Activated naive CD4-positive, alpha-beta T cell treated with anti-CD3 and anti-CD28 coated beads for 36 hours (primary cell): ENCODE measurements at regions of chr15 and their contacts with region 1.

Region 1: DNA sequence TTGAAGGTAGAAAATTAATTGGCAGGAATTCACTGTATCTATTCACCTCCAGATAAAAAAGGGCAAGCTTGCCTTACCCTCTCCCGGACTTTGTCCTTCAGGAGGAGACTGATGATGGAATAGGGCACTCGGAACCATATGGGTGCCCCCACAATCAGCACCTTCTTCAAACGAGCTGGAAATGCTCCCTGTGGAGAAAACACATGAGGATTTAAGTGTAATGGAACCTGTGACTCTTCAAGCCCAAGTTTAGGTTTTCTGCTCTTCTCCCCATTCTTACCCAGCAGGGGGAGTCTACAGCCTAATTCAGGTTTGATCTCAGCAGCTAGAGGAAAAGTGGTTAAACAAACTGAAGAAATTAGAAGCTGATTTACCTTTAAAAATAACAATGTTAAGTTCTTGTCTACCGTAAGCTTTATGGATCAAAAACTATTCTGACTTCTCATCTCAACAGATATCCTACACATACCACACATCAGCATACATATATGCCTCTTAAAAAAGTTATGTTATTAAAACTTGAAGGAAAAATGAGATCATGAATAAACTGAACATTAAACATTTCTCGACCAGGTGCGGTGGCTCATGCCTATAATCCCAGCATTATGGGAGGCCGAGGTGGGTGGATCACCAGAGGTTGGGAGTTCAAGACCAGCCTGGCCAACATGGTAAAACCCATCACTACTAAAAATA is 57.5 kb upstream of the SIN3A start:
- DNase-seq: peak; percentile 23
- H3K4me3 Mint-ChIP-seq: no peak overlapping the region
- H3K27ac Mint-ChIP-seq: no peak overlapping the region
- H3K4me1 Mint-ChIP-seq: no peaks in the 10 kb centered on the region
- H3K27me3 Mint-ChIP-seq: no peaks in the 10 kb centered on the region

Region 2: GRCh38 chr15:75647370-75648155 is 138.6 kb after region 1 on chr15 and contains the start of gene SNX33:
- CTCF ChIA-PET with region 1: interaction called, 14 read pairs
- intact Hi-C with region 1: no loop called
- DNase-seq: peak; percentile 77
- H3K4me3 Mint-ChIP-seq: peak within 1 kb of the TSS; percentile 81
- H3K27ac Mint-ChIP-seq: peak within 1 kb of the TSS; percentile 7
- H3K4me1 Mint-ChIP-seq: peaks cover 18% of the 10 kb centered on the region
- H3K27me3 Mint-ChIP-seq: no peaks in the 10 kb centered on the region
- total RNA-seq, gene SNX33: 1.1 TPM

Region 3: DNA sequence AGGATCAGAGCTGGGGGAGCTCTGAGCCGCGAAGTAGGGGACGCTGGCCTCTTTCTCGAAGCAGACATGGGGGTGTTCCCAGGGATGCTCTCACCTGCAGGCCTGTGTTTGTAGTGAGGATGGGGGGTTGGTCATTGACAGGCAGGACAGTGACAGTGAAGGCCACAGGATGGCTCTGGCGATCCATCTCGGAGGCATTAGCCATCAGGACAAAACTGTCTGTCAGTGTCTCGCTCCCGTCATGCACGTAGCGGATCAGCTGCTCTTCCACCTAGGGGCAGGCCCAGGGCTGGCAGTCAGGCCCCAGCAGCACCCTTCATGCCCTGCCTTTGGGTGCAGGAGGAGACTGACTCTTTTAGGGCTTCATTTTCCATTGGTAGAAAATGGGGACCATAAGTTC is 175.7 kb after region 1 on chr15:
- CTCF ChIA-PET with region 1: interaction called, 4 read pairs
- intact Hi-C with region 1: loop called (anchors 2 kb)
- DNase-seq: no peak
- H3K4me3 Mint-ChIP-seq: no peak overlapping the region
- H3K27ac Mint-ChIP-seq: no peak overlapping the region
- H3K4me1 Mint-ChIP-seq: no peaks in the 10 kb centered on the region
- H3K27me3 Mint-ChIP-seq: no peaks in the 10 kb centered on the region